WTC11 (cell line): ENCODE measurements at regions of chr2 and their contacts with region 1.

Region 1: DNA sequence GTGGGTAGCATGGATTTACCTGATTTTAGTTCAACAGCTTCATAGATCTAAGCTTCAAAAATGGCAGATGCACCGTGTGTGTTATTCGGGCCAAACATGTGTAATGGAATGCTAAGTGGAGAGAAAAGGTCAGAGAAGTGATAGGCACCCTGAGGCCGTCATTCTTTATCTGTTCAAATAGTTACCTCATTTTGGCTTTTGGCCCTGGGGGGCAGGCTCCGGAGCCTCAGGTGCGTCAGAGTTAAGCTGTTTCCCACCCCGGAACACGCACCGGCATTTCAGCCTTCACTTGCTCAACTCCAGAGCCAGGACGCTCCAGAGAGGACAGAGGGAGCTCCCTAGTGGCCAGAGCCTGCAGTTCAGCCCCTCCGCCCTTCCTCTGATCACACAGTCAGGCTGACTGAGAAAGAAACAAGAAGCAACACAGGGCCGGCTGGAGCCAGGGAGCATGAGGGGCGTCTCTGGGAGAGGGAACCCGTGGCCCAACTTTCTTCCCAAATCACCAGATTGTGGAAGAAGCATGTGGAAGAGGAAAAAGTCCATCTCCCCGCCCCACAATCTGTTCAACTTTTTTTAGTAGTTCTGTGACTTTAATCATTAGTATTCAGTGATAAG is 135.2 kb upstream of the EPC2 start:
- DNase-seq: peak; percentile 94
- ATAC-seq: peak; percentile 100
- H3K4me3 Mint-ChIP-seq: peak overlapping the region; percentile 15; the same call in 1 of the 2 replicates
- H3K27ac Mint-ChIP-seq: no peak overlapping the region
- H3K4me1 Mint-ChIP-seq: peaks cover 13% of the 10 kb centered on the region
- H3K27me3 Mint-ChIP-seq: no peaks in the 10 kb centered on the region
- CTCF ChIP-seq: peak; percentile 65

Region 2: DNA sequence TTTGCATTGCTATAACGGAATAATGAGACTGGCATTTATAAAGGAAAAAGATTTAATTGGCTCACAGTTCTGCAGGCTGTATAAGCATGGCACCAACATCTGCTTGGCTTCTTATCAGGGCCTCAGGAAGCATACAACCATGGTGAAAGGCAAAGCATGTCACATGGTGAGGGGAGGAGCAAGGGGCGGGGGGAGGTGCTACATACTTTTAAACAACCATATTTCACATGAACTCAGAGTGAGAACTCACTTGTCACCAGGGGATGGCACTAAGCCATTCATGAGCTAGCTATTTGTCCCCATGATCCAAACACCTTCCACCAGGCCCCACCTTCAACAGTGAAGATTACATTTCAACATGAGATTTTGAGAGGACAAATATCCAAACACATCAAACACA is 299.8 kb before region 1 on chr2:
- CTCF ChIA-PET with region 1: interaction called, 10 read pairs
- POLR2A ChIA-PET with region 1: no interaction called
- DNase-seq: peak; percentile 31
- ATAC-seq: peak; percentile 94
- H3K4me3 Mint-ChIP-seq: no peak overlapping the region
- H3K27ac Mint-ChIP-seq: no peak overlapping the region
- H3K4me1 Mint-ChIP-seq: no peaks in the 10 kb centered on the region
- H3K27me3 Mint-ChIP-seq: no peaks in the 10 kb centered on the region
- CTCF ChIP-seq: no peak

Region 3: GRCh38 chr2:148483666-148484065 is 25.7 kb before region 1 on chr2:
- CTCF ChIA-PET with region 1: interaction called, 11 read pairs
- POLR2A ChIA-PET with region 1: no interaction called
- DNase-seq: no peak
- ATAC-seq: no peak; the same call in 1 of the 2 replicates
- H3K4me3 Mint-ChIP-seq: no peak overlapping the region
- H3K27ac Mint-ChIP-seq: no peak overlapping the region
- H3K4me1 Mint-ChIP-seq: peaks cover 5% of the 10 kb centered on the region; the same call in 1 of the 2 replicates
- H3K27me3 Mint-ChIP-seq: no peaks in the 10 kb centered on the region
- CTCF ChIP-seq: no peak